ENCODE measurements at regions of chr9 and their contacts with region 1.

Region 1: GRCh38 chr9:4640027-4640426 is 22.1 kb upstream of the PLPP6 start:
- DNase-seq: peak; percentile 64
- H3K4me3 ChIP-seq: no peak overlapping the region
- H3K27ac ChIP-seq: no peak overlapping the region
- H3K4me1 ChIP-seq: no peaks in the 10 kb centered on the region
- H3K27me3 ChIP-seq: no peaks in the 10 kb centered on the region
- CTCF ChIP-seq: peak; percentile 37 to 51
- POLR2A ChIP-seq: no peak

Region 2: GRCh38 chr9:4315582-4316215 is 324.3 kb before region 1 on chr9:
- CTCF ChIA-PET with region 1: interaction called, 13 read pairs
- POLR2A ChIA-PET with region 1: no interaction called
- dilution Hi-C with region 1: no loop called
- intact Hi-C with region 1: loop called (anchors 2 kb)
- DNase-seq: peak; percentile 85
- H3K4me3 ChIP-seq: no peak overlapping the region
- H3K27ac ChIP-seq: no peak overlapping the region
- H3K4me1 ChIP-seq: peaks cover 4% of the 10 kb centered on the region
- H3K27me3 ChIP-seq: no peaks in the 10 kb centered on the region
- CTCF ChIP-seq: peak; percentile 89 to 93
- POLR2A ChIP-seq: no peak

Region 3: GRCh38 chr9:4375424-4376200 is 264.4 kb before region 1 on chr9:
- CTCF ChIA-PET with region 1: interaction called, 114 read pairs
- POLR2A ChIA-PET with region 1: no interaction called
- dilution Hi-C with region 1: no loop called
- intact Hi-C with region 1: no loop called
- DNase-seq: peak; percentile 47
- H3K4me3 ChIP-seq: no peak overlapping the region
- H3K27ac ChIP-seq: no peak overlapping the region
- H3K4me1 ChIP-seq: no peaks in the 10 kb centered on the region
- H3K27me3 ChIP-seq: peaks cover 4 to 10% of the 10 kb centered on the region in 2 experiments
- CTCF ChIP-seq: peak; percentile 18 to 23
- POLR2A ChIP-seq: no peak

Region 4: DNA sequence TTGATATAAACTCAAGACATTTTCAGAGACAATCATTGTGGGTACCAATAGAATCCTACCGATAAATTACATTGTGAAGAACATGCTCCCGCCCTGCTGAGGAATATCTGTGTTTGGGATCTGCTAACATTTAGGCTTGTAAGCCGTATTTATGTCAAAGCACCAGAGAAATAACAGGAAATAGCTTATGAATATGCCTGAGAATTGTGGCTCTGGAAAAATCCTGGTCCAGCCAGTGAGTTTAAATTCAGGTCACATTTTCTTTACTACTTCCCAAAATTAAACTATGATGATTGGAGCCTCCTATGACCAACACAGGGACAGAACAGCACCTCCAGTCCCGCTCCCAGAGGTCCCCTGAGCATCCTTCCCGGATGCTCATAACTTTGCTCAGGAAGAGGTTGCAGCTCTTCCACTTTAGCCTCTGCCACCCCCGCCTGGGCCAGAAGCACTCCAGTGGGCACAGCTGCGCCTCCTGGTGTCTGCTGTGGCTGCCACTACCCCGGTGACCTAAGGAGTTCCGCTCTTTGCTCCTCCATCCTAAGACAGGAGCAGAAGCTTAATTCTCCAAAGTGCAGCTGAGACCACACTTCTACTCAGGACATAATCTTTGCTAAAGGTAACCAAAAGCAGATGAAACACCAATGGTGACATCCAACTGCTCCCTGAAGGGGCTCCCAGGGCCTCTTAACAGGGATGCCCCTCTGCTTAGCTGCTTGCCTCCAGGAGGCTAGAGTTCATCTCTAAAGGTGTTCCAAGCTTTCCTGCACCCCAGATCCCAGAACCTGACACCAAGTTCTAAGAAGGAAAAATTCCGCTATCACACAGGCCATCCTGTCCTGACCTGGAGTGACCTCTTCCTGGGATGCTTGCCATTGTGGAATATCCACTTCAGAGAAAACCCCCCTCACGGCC is 91.0 kb before region 1 on chr9:
- CTCF ChIA-PET with region 1: interaction called, 10 read pairs
- POLR2A ChIA-PET with region 1: no interaction called
- dilution Hi-C with region 1: no loop called
- intact Hi-C with region 1: no loop called
- DNase-seq: peak; percentile 85
- H3K4me3 ChIP-seq: no peak overlapping the region
- H3K27ac ChIP-seq: no peak overlapping the region
- H3K4me1 ChIP-seq: peaks cover 41% of the 10 kb centered on the region
- H3K27me3 ChIP-seq: no peaks in the 10 kb centered on the region
- CTCF ChIP-seq: peak; percentile 44 to 53
- POLR2A ChIP-seq: no peak

Region 5: GRCh38 chr9:4555251-4555650 is 84.8 kb before region 1 on chr9:
- CTCF ChIA-PET with region 1: interaction called, 10 read pairs
- POLR2A ChIA-PET with region 1: no interaction called
- dilution Hi-C with region 1: no loop called
- intact Hi-C with region 1: loop called (anchors 5 kb)
- DNase-seq: peak; percentile 91
- H3K4me3 ChIP-seq: no peak overlapping the region
- H3K27ac ChIP-seq: peak overlapping the region; percentile 86
- H3K4me1 ChIP-seq: peaks cover 23% of the 10 kb centered on the region
- H3K27me3 ChIP-seq: no peaks in the 10 kb centered on the region
- CTCF ChIP-seq: no peak
- POLR2A ChIP-seq: no peak

Region 6: GRCh38 chr9:4604678-4605095 is 35.3 kb before region 1 on chr9:
- CTCF ChIA-PET with region 1: interaction called, 26 read pairs
- POLR2A ChIA-PET with region 1: no interaction called
- dilution Hi-C with region 1: no loop called
- intact Hi-C with region 1: loop called (anchors 1 kb)
- DNase-seq: peak; percentile 83
- H3K4me3 ChIP-seq: no peak overlapping the region
- H3K27ac ChIP-seq: no peak overlapping the region
- H3K4me1 ChIP-seq: no peaks in the 10 kb centered on the region
- H3K27me3 ChIP-seq: no peaks in the 10 kb centered on the region
- CTCF ChIP-seq: peak; percentile 57 to 61
- POLR2A ChIP-seq: no peak

Region 7: DNA sequence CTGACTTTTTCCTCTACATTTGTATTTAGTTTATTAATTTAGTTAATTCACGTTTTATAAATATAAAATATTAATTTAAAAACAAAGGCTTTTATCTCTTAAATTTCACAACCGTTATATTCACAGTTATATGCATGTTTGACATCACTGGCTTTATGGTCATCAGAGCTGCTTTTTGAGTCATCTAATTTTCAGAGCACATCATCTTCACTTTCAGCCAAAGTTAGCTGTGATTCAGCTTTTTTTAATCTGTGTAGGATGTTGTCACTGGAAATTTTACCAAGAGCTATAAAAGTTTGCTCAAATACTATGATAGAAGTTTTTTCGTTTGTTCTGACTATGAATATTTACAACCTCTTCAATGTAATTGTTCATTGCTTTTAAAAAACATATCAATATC is 51.8 kb after region 1 on chr9:
- CTCF ChIA-PET with region 1: no interaction called
- POLR2A ChIA-PET with region 1: no interaction called
- dilution Hi-C with region 1: no loop called
- intact Hi-C with region 1: no loop called
- DNase-seq: no peak
- H3K4me3 ChIP-seq: no peak overlapping the region
- H3K27ac ChIP-seq: no peak overlapping the region
- H3K4me1 ChIP-seq: no peaks in the 10 kb centered on the region
- H3K27me3 ChIP-seq: no peaks in the 10 kb centered on the region
- CTCF ChIP-seq: no peak
- POLR2A ChIP-seq: no peak

Region 8: DNA sequence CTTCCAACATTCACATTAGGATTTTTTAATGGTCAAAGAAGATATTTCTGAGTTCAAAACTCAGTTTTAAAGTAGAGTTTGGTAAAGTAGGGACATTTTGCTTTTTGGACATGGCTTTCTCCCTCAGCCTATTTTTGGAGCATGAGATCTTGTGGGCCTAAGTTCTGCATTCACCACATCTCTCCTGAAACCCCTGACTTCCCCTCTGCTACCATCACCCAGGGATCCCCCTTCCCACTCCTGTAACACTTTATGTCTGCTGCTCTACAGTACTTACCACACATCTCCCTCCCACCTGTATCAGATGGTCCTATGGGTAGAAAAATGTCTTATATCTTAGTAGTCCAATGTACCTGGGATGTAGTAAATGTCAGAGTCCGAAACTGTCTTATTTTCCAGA is 296.8 kb after region 1 on chr9:
- CTCF ChIA-PET with region 1: no interaction called
- POLR2A ChIA-PET with region 1: no interaction called
- dilution Hi-C with region 1: no loop called
- intact Hi-C with region 1: no loop called
- DNase-seq: no peak
- H3K4me3 ChIP-seq: no peak overlapping the region
- H3K27ac ChIP-seq: no peak overlapping the region
- H3K4me1 ChIP-seq: peaks cover 23% of the 10 kb centered on the region
- H3K27me3 ChIP-seq: peaks cover 0 to 2% of the 10 kb centered on the region in 2 experiments
- CTCF ChIP-seq: no peak
- POLR2A ChIP-seq: no peak